ENCODE measurements at regions of chr2 and their contacts with region 1.

Region 1: DNA sequence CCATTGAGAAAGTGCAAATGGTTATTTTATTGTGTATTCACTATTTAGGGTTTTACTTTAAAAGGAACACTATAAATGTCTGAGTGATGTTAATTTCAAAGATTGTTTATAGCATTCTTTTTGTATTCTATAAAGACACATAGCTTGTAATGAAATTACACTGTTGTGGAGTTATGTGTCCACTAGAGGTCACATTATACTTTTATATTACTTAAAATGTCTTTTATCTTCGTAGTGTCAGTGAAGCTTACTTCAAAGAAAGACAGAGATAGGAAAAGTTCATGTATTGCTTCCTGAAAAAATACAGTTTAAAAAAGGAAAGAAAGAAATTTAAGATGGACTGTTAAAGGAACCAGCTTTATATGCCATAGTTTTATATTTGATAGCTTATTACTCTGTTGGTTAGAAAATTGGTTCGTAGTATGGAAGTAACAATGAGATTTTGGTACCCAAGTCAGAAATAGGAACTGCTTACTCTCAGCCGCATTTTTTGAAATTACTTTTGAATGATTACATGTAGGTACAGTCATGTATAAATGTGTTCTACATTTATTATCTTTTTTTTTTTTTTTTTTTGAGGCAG is 20.5 kb downstream of the APLF start:
- DNase-seq: peak; percentile 44
- H3K4me3 ChIP-seq: no peak overlapping the region
- H3K27ac ChIP-seq: no peak overlapping the region
- H3K4me1 ChIP-seq: peaks cover 2% of the 10 kb centered on the region
- H3K27me3 ChIP-seq: no peaks in the 10 kb centered on the region
- CTCF ChIP-seq: peak; percentile 11 to 21
- POLR2A ChIP-seq: no peak

Region 2: GRCh38 chr2:68319398-68320117 is 168.3 kb before region 1 on chr2 and contains the start of gene CNRIP1:
- CTCF ChIA-PET with region 1: no interaction called
- POLR2A ChIA-PET with region 1: no interaction called
- dilution Hi-C with region 1: no loop called
- intact Hi-C with region 1: no loop called
- DNase-seq: peak; percentile 94
- H3K4me3 ChIP-seq: peak within 1 kb of the TSS; percentile 60 to 83 (median 79)
- H3K27ac ChIP-seq: peak within 1 kb of the TSS; percentile 99
- H3K4me1 ChIP-seq: peaks cover 22% of the 10 kb centered on the region
- H3K27me3 ChIP-seq: no peaks in the 10 kb centered on the region
- CTCF ChIP-seq: no peak
- POLR2A ChIP-seq: no peak
- total RNA-seq, gene CNRIP1: 73.8 and 74.6 TPM in 2 replicates

Region 3: GRCh38 chr2:68379184-68379708 is 108.6 kb before region 1 on chr2:
- CTCF ChIA-PET with region 1: no interaction called
- POLR2A ChIA-PET with region 1: no interaction called
- dilution Hi-C with region 1: no loop called
- intact Hi-C with region 1: no loop called
- DNase-seq: no peak
- H3K4me3 ChIP-seq: no peak overlapping the region
- H3K27ac ChIP-seq: no peak overlapping the region
- H3K4me1 ChIP-seq: no peaks in the 10 kb centered on the region
- H3K27me3 ChIP-seq: peaks cover 7 to 32% of the 10 kb centered on the region in 2 experiments
- CTCF ChIP-seq: no peak
- POLR2A ChIP-seq: no peak

Region 4: GRCh38 chr2:68475110-68475509 is 12.8 kb before region 1 on chr2:
- CTCF ChIA-PET with region 1: interaction called, 13 read pairs
- POLR2A ChIA-PET with region 1: no interaction called
- dilution Hi-C with region 1: no loop called
- intact Hi-C with region 1: no loop called
- DNase-seq: no peak
- H3K4me3 ChIP-seq: no peak overlapping the region
- H3K27ac ChIP-seq: no peak overlapping the region
- H3K4me1 ChIP-seq: peaks cover 5% of the 10 kb centered on the region
- H3K27me3 ChIP-seq: no peaks in the 10 kb centered on the region
- CTCF ChIP-seq: no peak
- POLR2A ChIP-seq: no peak

Region 5: DNA sequence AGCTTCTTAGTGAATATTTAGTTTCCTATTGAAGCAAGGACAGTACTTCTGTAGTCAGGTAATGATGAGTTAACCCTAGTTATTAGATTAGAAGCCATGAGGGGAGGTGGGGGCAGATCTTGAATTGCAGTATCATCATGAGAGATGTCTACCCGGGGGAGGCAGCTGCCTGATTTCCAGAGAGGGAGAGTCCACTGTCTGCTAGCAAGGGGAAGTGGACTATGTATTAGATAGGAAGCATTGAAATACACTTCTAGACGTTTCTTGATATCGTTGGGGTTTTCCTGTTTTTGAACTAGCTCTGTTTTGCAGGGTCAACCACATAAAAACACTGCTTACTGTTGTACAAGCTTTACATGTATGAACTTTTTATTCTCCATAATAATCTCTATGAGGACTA is 18.3 kb after region 1 on chr2:
- CTCF ChIA-PET with region 1: interaction called, 35 read pairs
- POLR2A ChIA-PET with region 1: no interaction called
- dilution Hi-C with region 1: no loop called
- intact Hi-C with region 1: no loop called
- DNase-seq: no peak
- H3K4me3 ChIP-seq: no peak overlapping the region
- H3K27ac ChIP-seq: no peak overlapping the region
- H3K4me1 ChIP-seq: no peaks in the 10 kb centered on the region
- H3K27me3 ChIP-seq: no peaks in the 10 kb centered on the region
- CTCF ChIP-seq: no peak
- POLR2A ChIP-seq: no peak

Region 6: DNA sequence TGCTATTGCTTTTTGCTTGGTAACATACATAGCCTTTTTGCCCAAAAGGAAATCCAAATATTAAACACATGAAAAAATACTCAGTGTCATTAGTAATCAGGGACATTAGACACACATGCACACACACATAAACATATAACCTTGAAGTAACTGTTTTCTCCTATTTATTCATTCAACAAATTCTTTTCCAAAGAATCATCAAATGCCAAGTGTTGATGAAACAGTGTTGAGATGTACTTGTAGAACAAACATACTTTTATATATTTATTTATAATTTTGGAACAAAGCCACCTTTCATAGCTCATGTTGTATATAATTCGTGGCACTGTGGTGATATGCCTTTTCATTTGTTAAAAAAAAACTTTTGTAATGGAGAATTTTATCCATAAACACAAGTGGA is 60.5 kb after region 1 on chr2:
- CTCF ChIA-PET with region 1: interaction called, 11 read pairs
- POLR2A ChIA-PET with region 1: no interaction called
- dilution Hi-C with region 1: no loop called
- intact Hi-C with region 1: no loop called
- DNase-seq: no peak
- H3K4me3 ChIP-seq: no peak overlapping the region
- H3K27ac ChIP-seq: no peak overlapping the region
- H3K4me1 ChIP-seq: no peaks in the 10 kb centered on the region
- H3K27me3 ChIP-seq: no peaks in the 10 kb centered on the region
- CTCF ChIP-seq: no peak
- POLR2A ChIP-seq: no peak

Region 7: GRCh38 chr2:68594674-68595492 is 107.0 kb after region 1 on chr2:
- CTCF ChIA-PET with region 1: interaction called, 290 read pairs
- POLR2A ChIA-PET with region 1: no interaction called
- dilution Hi-C with region 1: no loop called
- intact Hi-C with region 1: loop called (anchors 1 kb)
- DNase-seq: peak; percentile 63
- H3K4me3 ChIP-seq: no peak overlapping the region
- H3K27ac ChIP-seq: no peak overlapping the region
- H3K4me1 ChIP-seq: no peaks in the 10 kb centered on the region
- H3K27me3 ChIP-seq: peaks cover 0 to 4% of the 10 kb centered on the region in 2 experiments
- CTCF ChIP-seq: peak; percentile 75 to 77
- POLR2A ChIP-seq: no peak

Region 8: DNA sequence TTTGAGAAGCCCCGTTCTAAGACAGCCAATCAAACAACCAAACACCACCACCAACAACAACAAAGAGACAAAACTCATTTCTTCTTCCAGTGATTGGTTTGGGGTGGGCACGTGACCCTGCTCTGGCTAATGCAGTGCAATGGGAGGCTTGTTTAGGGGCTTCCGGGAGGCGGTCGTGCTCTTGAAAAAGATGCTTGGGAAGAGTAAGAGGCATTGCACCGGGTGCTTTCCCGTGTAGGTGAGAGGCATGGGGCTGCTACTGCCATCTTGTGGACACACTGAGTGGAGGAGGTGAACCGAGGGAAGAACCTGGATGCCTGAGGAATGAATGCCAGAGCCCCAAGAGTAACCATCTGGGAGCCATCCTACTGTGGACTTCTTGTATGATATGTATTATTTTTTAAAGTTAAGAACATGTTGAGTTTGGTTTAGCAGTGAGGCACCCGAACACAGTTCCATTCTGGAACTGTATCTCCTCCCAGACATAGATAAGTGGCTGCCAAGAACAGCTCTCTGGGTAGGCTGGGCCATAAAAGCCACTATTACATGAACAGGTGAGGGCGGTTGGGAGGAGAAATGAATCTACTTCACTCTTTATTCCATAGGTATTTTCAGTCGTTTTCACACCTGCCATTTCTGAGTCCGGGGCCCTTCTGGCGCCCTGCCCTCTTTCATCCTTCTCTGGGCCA is 227.6 kb after region 1 on chr2:
- CTCF ChIA-PET with region 1: interaction called, 70 read pairs
- POLR2A ChIA-PET with region 1: no interaction called
- dilution Hi-C with region 1: loop called (anchors 25 kb)
- intact Hi-C with region 1: loop called (anchors 1 kb)
- DNase-seq: peak; percentile 54
- H3K4me3 ChIP-seq: no peak overlapping the region
- H3K27ac ChIP-seq: no peak overlapping the region
- H3K4me1 ChIP-seq: no peaks in the 10 kb centered on the region
- H3K27me3 ChIP-seq: peaks cover 16 to 27% of the 10 kb centered on the region in 2 experiments
- CTCF ChIP-seq: peak; percentile 73 to 83
- POLR2A ChIP-seq: no peak

Measured in endothelial cell of umbilical vein (primary cell).